ENCODE measurements at regions of chr5 and their contacts with region 1.

Region 1: GRCh38 chr5:126776497-126777256 is at the start of gene LMNB1:
- DNase-seq: peak; percentile 97
- H3K4me3 Mint-ChIP-seq: peak within 1 kb of the TSS; percentile 97
- H3K27ac Mint-ChIP-seq: peak within 1 kb of the TSS; percentile 99
- H3K4me1 Mint-ChIP-seq: peaks cover 14% of the 10 kb centered on the region
- H3K27me3 Mint-ChIP-seq: no peaks in the 10 kb centered on the region
- total RNA-seq, gene LMNB1: 212 to 215 TPM

Region 2: DNA sequence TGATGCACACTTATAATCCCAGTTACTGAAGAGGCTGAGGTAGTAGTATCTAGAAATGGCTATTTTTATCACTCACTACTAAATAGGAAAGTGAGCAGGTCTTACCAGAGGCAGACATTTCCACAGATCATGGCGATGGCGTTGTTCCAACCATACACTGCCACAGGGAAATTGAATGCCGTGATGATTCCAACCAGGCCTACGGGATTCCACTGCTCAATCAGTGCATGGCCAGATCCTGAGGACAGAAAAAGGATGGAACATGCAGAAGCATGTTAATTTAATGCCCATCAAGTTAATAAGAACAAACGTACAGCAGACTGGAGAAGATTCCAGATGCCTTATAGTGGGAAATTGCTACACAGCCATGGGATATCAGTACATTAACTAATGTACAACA is 199.7 kb before region 1 on chr5:
- CTCF ChIA-PET with region 1: no interaction called
- POLR2A ChIA-PET with region 1: no interaction called
- intact Hi-C with region 1: no loop called
- DNase-seq: no peak
- H3K4me3 Mint-ChIP-seq: no peak overlapping the region
- H3K27ac Mint-ChIP-seq: no peak overlapping the region
- H3K4me1 Mint-ChIP-seq: no peaks in the 10 kb centered on the region
- H3K27me3 Mint-ChIP-seq: no peaks in the 10 kb centered on the region

Region 3: GRCh38 chr5:126600631-126601511 is 175.8 kb before region 1 on chr5 and contains the start of gene PHAX:
- CTCF ChIA-PET with region 1: interaction called, 17 read pairs
- POLR2A ChIA-PET with region 1: interaction called, 4 read pairs
- intact Hi-C with region 1: loop called (anchors 1 kb)
- DNase-seq: peak; percentile 82
- H3K4me3 Mint-ChIP-seq: peak within 1 kb of the TSS; percentile 99
- H3K27ac Mint-ChIP-seq: peak within 1 kb of the TSS; percentile 97
- H3K4me1 Mint-ChIP-seq: peaks cover 35% of the 10 kb centered on the region
- H3K27me3 Mint-ChIP-seq: no peaks in the 10 kb centered on the region
- total RNA-seq, gene PHAX: 40.7 to 43.2 TPM

Region 4: DNA sequence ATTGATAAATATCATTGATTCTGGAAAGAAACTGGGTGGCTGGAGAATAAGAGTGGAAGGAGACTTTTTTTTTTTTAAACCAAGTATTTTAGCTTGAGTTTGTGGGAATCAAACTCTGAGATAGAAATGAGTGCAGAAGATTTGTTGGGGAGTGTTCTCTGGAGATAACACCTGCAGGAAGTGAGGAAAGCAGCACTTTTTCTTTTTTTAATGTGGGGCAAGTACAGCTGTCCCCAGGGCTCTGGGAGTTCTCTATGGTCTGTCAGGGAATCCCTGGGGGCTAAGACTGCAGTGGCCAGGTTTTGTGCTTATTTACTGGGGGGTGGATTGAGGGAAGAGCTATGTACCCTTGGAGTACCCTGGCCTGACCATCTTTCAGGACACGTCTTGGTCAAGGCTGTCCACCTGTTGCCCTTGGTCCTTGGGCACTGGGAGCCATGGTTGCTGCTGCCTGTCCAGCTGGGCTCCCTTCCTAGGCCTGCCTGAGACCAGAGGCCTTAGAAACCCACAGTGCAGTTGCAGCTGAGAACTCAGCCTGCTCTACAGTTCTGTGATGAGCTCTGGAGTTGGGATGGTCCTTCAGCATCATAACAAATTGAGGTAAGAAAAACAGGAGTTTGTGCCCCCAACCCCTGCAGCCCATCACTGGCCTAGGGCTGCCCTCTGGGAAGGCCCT is 90.1 kb before region 1 on chr5:
- CTCF ChIA-PET with region 1: interaction called, 213 read pairs
- POLR2A ChIA-PET with region 1: interaction called, 18 read pairs
- intact Hi-C with region 1: no loop called
- DNase-seq: no peak
- H3K4me3 Mint-ChIP-seq: no peak overlapping the region
- H3K27ac Mint-ChIP-seq: no peak overlapping the region
- H3K4me1 Mint-ChIP-seq: peaks cover 11% of the 10 kb centered on the region
- H3K27me3 Mint-ChIP-seq: peaks cover 3% of the 10 kb centered on the region

Region 5: GRCh38 chr5:126755593-126755992 is 21.1 kb before region 1 on chr5:
- CTCF ChIA-PET with region 1: interaction called, 15 read pairs
- POLR2A ChIA-PET with region 1: interaction called, 21 read pairs
- intact Hi-C with region 1: no loop called
- DNase-seq: no peak
- H3K4me3 Mint-ChIP-seq: no peak overlapping the region
- H3K27ac Mint-ChIP-seq: no peak overlapping the region
- H3K4me1 Mint-ChIP-seq: peaks cover 40% of the 10 kb centered on the region
- H3K27me3 Mint-ChIP-seq: no peaks in the 10 kb centered on the region

Region 6: GRCh38 chr5:126808521-126808988 is 31.9 kb after region 1 on chr5:
- CTCF ChIA-PET with region 1: interaction called, 58 read pairs
- POLR2A ChIA-PET with region 1: interaction called, 70 read pairs
- intact Hi-C with region 1: loop called (anchors 1 kb)
- DNase-seq: no peak
- H3K4me3 Mint-ChIP-seq: no peak overlapping the region
- H3K27ac Mint-ChIP-seq: peak overlapping the region; percentile 16
- H3K4me1 Mint-ChIP-seq: peaks cover 55% of the 10 kb centered on the region
- H3K27me3 Mint-ChIP-seq: no peaks in the 10 kb centered on the region

Region 7: GRCh38 chr5:127517480-127518318 is 741.0 kb after region 1 on chr5 and contains the start of gene PRRC1:
- CTCF ChIA-PET with region 1: no interaction called
- POLR2A ChIA-PET with region 1: interaction called, 5 read pairs
- intact Hi-C with region 1: loop called (anchors 2 kb)
- DNase-seq: peak; percentile 87
- H3K4me3 Mint-ChIP-seq: peak within 1 kb of the TSS; percentile 84
- H3K27ac Mint-ChIP-seq: peak within 1 kb of the TSS; percentile 50
- H3K4me1 Mint-ChIP-seq: peaks cover 33% of the 10 kb centered on the region
- H3K27me3 Mint-ChIP-seq: peaks cover 3% of the 10 kb centered on the region
- total RNA-seq, gene PRRC1: 39.4 to 44.0 TPM

Measured in activated CD4-positive, alpha-beta memory T cell treated with anti-CD3 and anti-CD28 coated beads for 36 hours (primary cell).